ENCODE measurements at regions of chr2 and their contacts with region 1.

Region 1: GRCh38 chr2:47313141-47313691 is 89.7 kb upstream of the MSH2 start:
- DNase-seq: no peak
- ATAC-seq: peak; percentile 49
- H3K4me3 Mint-ChIP-seq: no peak overlapping the region
- H3K27ac Mint-ChIP-seq: no peak overlapping the region; the same call in 1 of the 2 replicates
- H3K4me1 Mint-ChIP-seq: peaks cover 16% of the 10 kb centered on the region
- H3K27me3 Mint-ChIP-seq: no peaks in the 10 kb centered on the region
- CTCF ChIP-seq: no peak

Region 2: GRCh38 chr2:47127862-47128543 is 185.2 kb before region 1 on chr2:
- CTCF ChIA-PET with region 1: interaction called, 12 read pairs
- POLR2A ChIA-PET with region 1: no interaction called
- DNase-seq: no peak
- ATAC-seq: peak; percentile 42
- H3K4me3 Mint-ChIP-seq: no peak overlapping the region
- H3K27ac Mint-ChIP-seq: no peak overlapping the region
- H3K4me1 Mint-ChIP-seq: peaks cover 11% of the 10 kb centered on the region
- H3K27me3 Mint-ChIP-seq: peaks cover 6% of the 10 kb centered on the region; the same call in 1 of the 2 replicates
- CTCF ChIP-seq: no peak

Region 3: GRCh38 chr2:47300609-47301276 is 12.5 kb before region 1 on chr2:
- CTCF ChIA-PET with region 1: interaction called, 21 read pairs
- POLR2A ChIA-PET with region 1: interaction called, 6 read pairs
- DNase-seq: no peak
- ATAC-seq: no peak
- H3K4me3 Mint-ChIP-seq: no peak overlapping the region
- H3K27ac Mint-ChIP-seq: no peak overlapping the region
- H3K4me1 Mint-ChIP-seq: peaks cover 21% of the 10 kb centered on the region
- H3K27me3 Mint-ChIP-seq: peaks cover 12% of the 10 kb centered on the region
- CTCF ChIP-seq: no peak

Region 4: GRCh38 chr2:47357483-47357882 is 44.3 kb after region 1 on chr2:
- CTCF ChIA-PET with region 1: no interaction called
- POLR2A ChIA-PET with region 1: no interaction called
- DNase-seq: no peak
- ATAC-seq: peak; percentile 65
- H3K4me3 Mint-ChIP-seq: no peak overlapping the region
- H3K27ac Mint-ChIP-seq: peak overlapping the region; percentile 17; the same call in 1 of the 2 replicates
- H3K4me1 Mint-ChIP-seq: peaks cover 13% of the 10 kb centered on the region
- H3K27me3 Mint-ChIP-seq: peaks cover 4% of the 10 kb centered on the region; the same call in 1 of the 2 replicates
- CTCF ChIP-seq: no peak